ENCODE measurements at regions of chr4 and their contacts with region 1.

Region 1: DNA sequence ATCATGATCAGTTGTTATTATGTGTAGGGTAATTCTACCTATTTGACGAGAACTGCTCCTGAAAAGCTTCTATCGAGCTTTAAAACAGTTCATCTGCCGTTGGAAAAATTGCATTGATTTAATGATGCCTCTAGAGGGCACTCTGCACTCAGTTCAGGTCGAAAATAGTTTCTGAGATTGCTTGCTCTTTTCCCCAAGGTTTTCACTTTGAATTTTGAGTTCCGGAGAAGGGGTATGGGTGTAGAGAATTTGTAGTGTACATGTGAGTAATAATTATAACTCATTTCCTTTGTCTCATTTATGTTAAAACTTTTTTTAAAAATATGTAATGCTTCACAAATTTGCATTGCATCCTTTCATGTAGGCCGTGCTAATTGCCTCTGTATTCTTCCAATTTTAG is 28.4 kb upstream of the TNIP3 start:
- DNase-seq: no peak
- H3K4me3 Mint-ChIP-seq: peak overlapping the region; percentile 14
- H3K27ac Mint-ChIP-seq: peak overlapping the region; percentile 56
- H3K4me1 Mint-ChIP-seq: peaks cover 59% of the 10 kb centered on the region
- H3K27me3 Mint-ChIP-seq: no peaks in the 10 kb centered on the region

Region 2: GRCh38 chr4:121016630-121017029 is 175.8 kb before region 1 on chr4:
- CTCF ChIA-PET with region 1: no interaction called
- POLR2A ChIA-PET with region 1: no interaction called
- DNase-seq: no peak
- H3K4me3 Mint-ChIP-seq: no peak overlapping the region
- H3K27ac Mint-ChIP-seq: no peak overlapping the region
- H3K4me1 Mint-ChIP-seq: no peaks in the 10 kb centered on the region
- H3K27me3 Mint-ChIP-seq: no peaks in the 10 kb centered on the region

Region 3: DNA sequence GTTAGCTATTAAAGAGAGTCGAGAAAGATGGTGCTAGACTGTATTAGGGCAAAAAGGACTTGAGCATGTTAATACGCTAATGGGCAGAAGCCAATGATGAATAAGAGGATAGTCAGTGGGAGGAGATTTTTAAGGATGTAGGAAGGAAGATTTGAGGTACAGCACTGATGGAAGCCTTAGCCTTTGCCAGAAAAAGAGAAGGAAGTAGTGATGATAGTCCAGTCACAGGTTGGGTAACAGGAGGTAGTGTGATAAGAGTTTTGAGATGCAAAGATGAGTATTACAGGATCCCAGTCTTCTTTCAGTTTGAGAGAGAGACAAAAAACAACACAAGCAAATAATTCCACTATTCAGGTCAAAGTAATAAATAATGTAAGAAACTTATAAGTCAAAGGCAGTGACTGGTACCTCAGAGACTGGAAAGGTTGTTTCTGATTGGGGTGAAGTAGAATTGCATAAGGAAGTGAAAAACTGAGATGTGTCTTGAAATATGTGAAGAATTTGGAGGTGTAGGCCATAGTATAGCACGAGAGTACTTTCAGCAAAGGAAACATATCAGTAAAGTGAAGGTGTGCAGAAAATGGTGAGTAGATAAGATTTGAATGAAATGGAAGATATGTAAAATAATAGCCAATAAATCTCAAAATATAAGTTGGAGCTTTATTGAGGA is 98.0 kb before region 1 on chr4:
- CTCF ChIA-PET with region 1: no interaction called
- POLR2A ChIA-PET with region 1: no interaction called
- DNase-seq: no peak
- H3K4me3 Mint-ChIP-seq: no peak overlapping the region
- H3K27ac Mint-ChIP-seq: no peak overlapping the region
- H3K4me1 Mint-ChIP-seq: no peaks in the 10 kb centered on the region
- H3K27me3 Mint-ChIP-seq: no peaks in the 10 kb centered on the region

Region 4: GRCh38 chr4:121154103-121154515 is 38.4 kb before region 1 on chr4:
- CTCF ChIA-PET with region 1: interaction called, 19 read pairs
- POLR2A ChIA-PET with region 1: interaction called, 10 read pairs
- DNase-seq: peak; percentile 37
- H3K4me3 Mint-ChIP-seq: peak overlapping the region; percentile 31
- H3K27ac Mint-ChIP-seq: peak overlapping the region; percentile 62
- H3K4me1 Mint-ChIP-seq: peaks cover 54% of the 10 kb centered on the region
- H3K27me3 Mint-ChIP-seq: peaks cover 8% of the 10 kb centered on the region

Region 5: GRCh38 chr4:121209171-121209570 is 16.7 kb after region 1 on chr4:
- CTCF ChIA-PET with region 1: interaction called, 10 read pairs
- POLR2A ChIA-PET with region 1: no interaction called
- DNase-seq: no peak
- H3K4me3 Mint-ChIP-seq: no peak overlapping the region
- H3K27ac Mint-ChIP-seq: no peak overlapping the region
- H3K4me1 Mint-ChIP-seq: peaks cover 7% of the 10 kb centered on the region
- H3K27me3 Mint-ChIP-seq: peaks cover 2% of the 10 kb centered on the region

Region 6: DNA sequence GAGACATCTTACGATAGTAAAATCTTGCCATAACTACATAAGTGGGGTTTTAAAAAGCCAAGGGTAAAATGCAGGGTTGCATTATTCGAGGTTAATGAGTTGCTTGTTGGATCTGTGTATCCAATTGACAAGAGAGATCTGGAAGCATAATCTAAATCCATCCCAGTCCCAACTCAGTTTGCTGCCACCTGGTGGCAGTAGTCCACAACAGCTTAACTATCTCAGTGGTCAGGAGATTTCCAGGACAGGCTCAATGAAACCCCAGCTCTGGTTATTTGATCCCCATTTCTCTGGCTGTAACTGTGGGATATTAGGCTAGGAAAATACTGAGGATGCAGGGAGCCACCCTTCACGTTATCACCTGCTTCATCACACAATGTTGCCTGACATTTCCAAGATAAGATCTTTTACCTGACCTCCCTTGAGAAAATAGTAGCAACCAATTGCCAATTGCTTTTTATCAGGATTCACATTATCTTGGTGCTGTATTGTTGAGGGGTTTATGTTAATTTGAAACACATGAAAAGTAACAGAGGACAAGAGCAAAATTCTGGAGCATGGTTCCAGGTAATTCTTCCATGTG is 59.8 kb after region 1 on chr4:
- CTCF ChIA-PET with region 1: interaction called, 52 read pairs
- POLR2A ChIA-PET with region 1: interaction called, 22 read pairs
- DNase-seq: peak; percentile 59
- H3K4me3 Mint-ChIP-seq: no peak overlapping the region
- H3K27ac Mint-ChIP-seq: no peak overlapping the region
- H3K4me1 Mint-ChIP-seq: peaks cover 54% of the 10 kb centered on the region
- H3K27me3 Mint-ChIP-seq: no peaks in the 10 kb centered on the region

Region 7: DNA sequence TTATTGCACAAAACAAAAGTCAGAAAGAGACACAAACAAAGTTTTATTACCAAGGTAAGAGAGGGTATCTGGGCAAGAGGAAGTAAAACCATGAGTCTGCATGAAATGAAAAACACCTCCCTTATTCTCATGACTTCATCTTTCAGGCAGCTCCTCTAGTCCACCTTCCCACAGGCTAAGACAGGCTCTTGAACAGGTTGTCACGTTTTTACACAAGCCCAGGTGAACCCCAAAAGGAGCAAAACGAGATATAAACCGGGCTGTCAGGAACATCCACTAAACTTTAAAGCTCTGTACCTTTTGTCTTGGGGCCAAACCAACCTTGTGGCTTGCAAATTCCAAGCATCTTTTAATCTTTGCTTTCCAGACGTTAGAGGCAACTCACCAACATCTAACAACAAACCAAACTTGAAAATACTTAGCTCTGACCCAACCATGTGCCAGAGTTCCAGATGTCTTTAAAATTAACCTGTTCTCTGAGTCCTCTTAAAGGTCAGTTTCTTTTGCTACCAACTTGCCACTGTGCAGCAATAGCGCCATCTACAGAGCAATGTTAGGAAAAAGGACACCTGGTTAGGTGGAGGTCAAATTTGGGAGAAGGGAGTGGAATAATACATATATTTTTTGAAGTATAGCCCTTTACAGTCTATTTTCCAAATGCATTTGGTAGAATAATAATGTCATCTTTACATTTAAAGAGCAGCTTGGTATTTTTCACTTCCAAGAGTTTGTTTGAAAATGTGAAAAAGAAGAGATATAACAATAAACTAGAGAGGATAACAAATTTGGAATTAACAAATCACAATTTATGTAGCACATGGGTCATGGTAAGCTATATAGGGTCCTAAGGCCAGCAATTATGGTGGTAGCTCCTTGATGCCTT is 115.2 kb after region 1 on chr4:
- CTCF ChIA-PET with region 1: interaction called, 72 read pairs
- POLR2A ChIA-PET with region 1: interaction called, 9 read pairs
- DNase-seq: peak; percentile 53
- H3K4me3 Mint-ChIP-seq: no peak overlapping the region
- H3K27ac Mint-ChIP-seq: no peak overlapping the region
- H3K4me1 Mint-ChIP-seq: peaks cover 23% of the 10 kb centered on the region
- H3K27me3 Mint-ChIP-seq: peaks cover 3% of the 10 kb centered on the region

Region 8: DNA sequence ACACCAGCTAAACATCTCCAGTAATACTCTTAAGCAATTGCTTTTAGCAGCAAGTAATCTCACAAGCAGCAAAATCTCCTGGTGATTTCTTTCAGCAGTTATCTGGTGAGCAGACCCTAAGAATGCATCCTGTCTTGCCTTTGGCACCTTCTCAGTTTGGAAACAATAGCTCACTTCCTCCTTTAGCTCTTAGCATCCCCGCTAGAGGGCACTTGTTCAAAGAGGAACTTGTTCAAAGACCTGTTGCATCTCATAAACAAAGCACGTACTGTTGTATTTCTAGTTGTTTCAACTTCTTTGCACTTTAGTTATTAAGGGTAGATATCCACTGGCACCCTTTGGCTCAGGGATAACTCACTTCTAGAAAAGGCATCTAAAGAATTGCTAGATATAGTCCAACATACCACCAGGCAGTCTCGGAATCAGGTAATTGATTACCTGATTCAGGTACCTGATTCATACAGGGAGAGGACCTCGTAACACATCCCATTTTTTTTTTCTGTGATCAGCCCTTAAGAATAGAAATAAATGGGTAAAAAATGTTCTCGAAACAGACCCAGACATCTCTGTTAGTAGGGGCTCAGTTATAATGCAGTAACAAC is 270.3 kb after region 1 on chr4:
- CTCF ChIA-PET with region 1: interaction called, 10 read pairs
- POLR2A ChIA-PET with region 1: no interaction called
- DNase-seq: peak; percentile 40
- H3K4me3 Mint-ChIP-seq: no peak overlapping the region
- H3K27ac Mint-ChIP-seq: no peak overlapping the region
- H3K4me1 Mint-ChIP-seq: peaks cover 2% of the 10 kb centered on the region
- H3K27me3 Mint-ChIP-seq: peaks cover 44% of the 10 kb centered on the region